ENCODE measurements at regions of chr5 and their contacts with region 1.

Region 1: GRCh38 chr5:176959051-176959450 is 47.5 kb downstream of the UIMC1 start:
- DNase-seq: peak; percentile 55
- ATAC-seq: peak; percentile 28
- H3K4me3 ChIP-seq: no peak overlapping the region
- H3K4me3 Mint-ChIP-seq: no peak overlapping the region
- H3K27ac ChIP-seq: no peak overlapping the region
- H3K27ac Mint-ChIP-seq: no peak overlapping the region
- H3K4me1 ChIP-seq: no peaks in the 10 kb centered on the region
- H3K4me1 Mint-ChIP-seq: peaks cover 5% of the 10 kb centered on the region
- H3K27me3 ChIP-seq: no peaks in the 10 kb centered on the region
- H3K27me3 Mint-ChIP-seq: no peaks in the 10 kb centered on the region
- CTCF ChIP-seq: peak; percentile 62

Region 2: DNA sequence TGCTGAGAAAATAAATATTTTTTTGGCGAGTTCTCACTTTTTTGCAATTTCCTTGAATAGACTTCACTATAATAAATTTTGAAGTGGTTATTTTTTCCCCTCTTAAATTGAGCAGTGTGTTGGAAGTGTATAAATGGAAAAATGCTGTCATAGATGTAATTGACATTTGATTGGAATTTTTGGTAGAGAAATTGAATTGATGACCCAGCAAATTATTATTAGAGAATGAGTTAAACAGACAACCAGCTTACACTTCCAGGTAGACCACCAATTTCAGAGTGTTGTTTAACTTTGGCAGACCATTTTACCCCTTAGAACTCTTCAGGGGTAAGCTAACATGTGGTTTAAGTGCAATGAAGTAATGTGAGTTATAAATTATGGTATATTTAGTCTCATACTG is 509.0 kb before region 1 on chr5:
- CTCF ChIA-PET with region 1: no interaction called
- POLR2A ChIA-PET with region 1: no interaction called
- intact Hi-C with region 1: no loop called
- DNase-seq: no peak
- ATAC-seq: no peak
- H3K4me3 ChIP-seq: no peak overlapping the region
- H3K4me3 Mint-ChIP-seq: no peak overlapping the region
- H3K27ac ChIP-seq: peak overlapping the region in 1 of 2 donors; percentile 36
- H3K27ac Mint-ChIP-seq: no peak overlapping the region
- H3K4me1 ChIP-seq: peaks cover 16 to 20% of the 10 kb centered on the region in 2 donors
- H3K4me1 Mint-ChIP-seq: peaks cover 36% of the 10 kb centered on the region
- H3K27me3 ChIP-seq: no peaks in the 10 kb centered on the region
- H3K27me3 Mint-ChIP-seq: no peaks in the 10 kb centered on the region
- CTCF ChIP-seq: no peak

Region 3: DNA sequence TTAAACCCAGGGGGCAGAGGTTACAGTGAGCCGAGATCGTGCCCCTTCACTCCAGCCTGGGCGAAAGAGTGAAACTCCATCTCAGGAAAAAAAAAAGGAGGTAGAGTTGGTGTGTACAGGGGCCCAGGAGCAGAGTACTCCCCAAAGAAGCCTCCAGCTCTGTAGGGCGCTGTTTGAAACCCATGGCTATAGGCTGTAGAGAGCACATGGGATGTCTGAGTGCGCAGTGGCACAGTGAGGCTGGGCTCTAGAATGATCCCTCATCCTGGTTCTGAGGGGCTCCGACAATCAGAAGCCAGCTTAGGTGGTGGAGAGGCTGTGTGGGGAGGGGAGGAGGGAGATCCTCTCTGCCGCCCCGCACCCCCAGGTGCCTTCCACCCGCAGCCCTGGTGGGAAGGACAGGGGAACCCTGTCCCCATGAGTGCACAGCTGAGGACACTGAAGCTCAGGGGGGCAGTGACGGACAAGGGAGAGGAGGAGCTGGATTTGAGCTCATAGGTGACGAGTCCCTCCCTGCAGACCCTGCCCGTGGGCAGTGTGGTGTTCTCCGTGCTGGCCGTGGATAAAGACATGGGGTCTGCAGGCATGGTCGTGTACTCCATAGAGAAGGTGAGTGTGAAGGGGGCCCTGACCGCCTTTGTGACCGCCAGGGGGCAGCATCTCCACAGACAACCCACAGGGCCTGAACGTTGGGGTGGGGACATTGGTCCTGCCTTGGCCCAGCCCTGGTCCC is 385.3 kb before region 1 on chr5:
- CTCF ChIA-PET with region 1: no interaction called
- POLR2A ChIA-PET with region 1: no interaction called
- intact Hi-C with region 1: loop called (anchors 2 kb)
- DNase-seq: peak; percentile 82
- ATAC-seq: peak; percentile 79
- H3K4me3 ChIP-seq: no peak overlapping the region
- H3K4me3 Mint-ChIP-seq: no peak overlapping the region
- H3K27ac ChIP-seq: no peak overlapping the region
- H3K27ac Mint-ChIP-seq: no peak overlapping the region
- H3K4me1 ChIP-seq: peaks cover 0 to 11% of the 10 kb centered on the region in 2 donors
- H3K4me1 Mint-ChIP-seq: peaks cover 5% of the 10 kb centered on the region
- H3K27me3 ChIP-seq: peaks cover 0 to 7% (median 2%) of the 10 kb centered on the region in 4 experiments
- H3K27me3 Mint-ChIP-seq: peaks cover 12% of the 10 kb centered on the region
- CTCF ChIP-seq: peak; percentile 92

Measured in B cell (primary cell).